Activated naive CD4-positive, alpha-beta T cell treated with anti-CD3 and anti-CD28 coated beads, Interleukin-2, amount 10 ng/mL, durations not matched to agents 7 days and 5 days (primary cell): ENCODE measurements at regions of chr11 and their contacts with region 1.

Region 1: DNA sequence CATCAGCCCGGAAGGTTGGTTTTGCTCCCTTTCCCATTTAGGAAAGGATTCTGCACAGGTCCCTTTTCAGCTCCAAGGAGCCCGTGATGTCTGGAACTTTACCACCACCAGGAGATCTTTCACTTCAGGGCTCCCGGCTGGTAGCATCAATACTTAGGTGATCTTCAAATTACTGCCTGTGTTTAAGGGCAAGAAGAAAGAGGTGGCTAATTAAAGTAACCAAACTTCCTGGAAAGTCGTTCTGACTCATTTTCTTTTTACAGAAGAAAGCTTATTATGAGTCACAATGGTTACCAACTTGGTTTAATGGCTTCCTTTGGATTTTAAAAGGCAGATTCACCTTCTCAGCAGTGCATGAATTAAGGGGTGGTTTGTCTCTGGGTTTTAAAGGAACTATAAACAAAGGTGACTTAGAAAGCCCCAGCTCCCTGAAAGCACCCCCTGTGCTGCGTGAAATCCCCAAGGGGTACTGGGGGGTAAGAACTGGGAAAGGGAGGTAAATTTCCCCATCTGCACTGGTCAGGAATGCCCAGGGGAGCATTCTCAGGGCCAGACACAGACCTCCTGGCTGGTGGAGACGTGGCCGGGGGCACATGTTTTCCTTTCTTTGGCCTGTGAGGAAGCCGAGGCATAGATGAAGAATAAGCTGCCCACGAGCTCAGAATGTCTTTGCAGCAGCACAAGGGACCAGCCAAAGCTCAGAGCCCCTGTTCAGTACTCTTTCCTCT is 8.8 kb downstream of the POU2F3 start:
- DNase-seq: no peak
- H3K4me3 Mint-ChIP-seq: no peak overlapping the region
- H3K27ac Mint-ChIP-seq: no peak overlapping the region
- H3K4me1 Mint-ChIP-seq: peaks cover 35% of the 10 kb centered on the region
- H3K27me3 Mint-ChIP-seq: peaks cover 95% of the 10 kb centered on the region

Region 2: GRCh38 chr11:120137611-120138521 is 110.8 kb before region 1 on chr11 and contains the start of gene TRIM29:
- CTCF ChIA-PET with region 1: no interaction called
- DNase-seq: no peak
- H3K4me3 Mint-ChIP-seq: no peak within 1 kb of the TSS
- H3K27ac Mint-ChIP-seq: no peak within 1 kb of the TSS
- H3K4me1 Mint-ChIP-seq: no peaks in the 10 kb centered on the region
- H3K27me3 Mint-ChIP-seq: peaks cover 22% of the 10 kb centered on the region

Region 3: GRCh38 chr11:120235024-120235861 is 13.5 kb before region 1 on chr11:
- CTCF ChIA-PET with region 1: interaction called, 10 read pairs
- DNase-seq: peak; percentile 76
- H3K4me3 Mint-ChIP-seq: no peak overlapping the region
- H3K27ac Mint-ChIP-seq: no peak overlapping the region
- H3K4me1 Mint-ChIP-seq: no peaks in the 10 kb centered on the region
- H3K27me3 Mint-ChIP-seq: peaks cover 79% of the 10 kb centered on the region

Region 4: DNA sequence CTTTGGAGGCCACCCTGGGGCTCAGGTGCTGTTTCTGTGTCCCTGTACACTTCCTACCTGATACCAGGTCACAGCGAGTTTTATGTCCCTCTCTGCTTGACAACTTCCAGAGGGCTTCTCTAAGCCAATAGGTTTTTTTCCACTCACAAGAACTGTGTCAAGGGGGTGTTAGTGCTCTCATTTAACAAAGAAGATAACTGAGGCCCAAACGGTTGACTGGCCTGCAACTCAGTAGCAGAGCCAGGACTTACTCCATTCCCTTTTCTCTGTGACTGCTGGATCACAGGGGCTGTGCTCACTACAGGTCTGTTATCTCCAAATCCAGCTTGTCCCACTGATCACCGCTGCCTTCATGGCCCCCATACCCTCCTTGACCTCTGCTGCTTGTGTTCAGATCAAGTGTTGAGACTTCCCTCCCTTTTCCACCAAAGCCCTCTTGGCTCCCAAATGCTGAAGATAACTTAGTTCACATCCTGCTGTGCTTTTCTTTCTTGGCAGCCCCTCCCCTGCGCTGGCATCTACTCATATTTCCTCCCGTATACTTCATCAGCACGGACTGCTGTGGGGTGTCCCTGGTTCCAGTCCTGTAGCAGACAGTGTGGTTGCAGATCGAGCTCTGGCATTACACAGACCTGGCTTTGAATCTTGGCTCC is 32.6 kb after region 1 on chr11:
- CTCF ChIA-PET with region 1: no interaction called
- DNase-seq: no peak
- H3K4me3 Mint-ChIP-seq: no peak overlapping the region
- H3K27ac Mint-ChIP-seq: no peak overlapping the region
- H3K4me1 Mint-ChIP-seq: no peaks in the 10 kb centered on the region
- H3K27me3 Mint-ChIP-seq: peaks cover 23% of the 10 kb centered on the region